ENCODE measurements at regions of chr15 and their contacts with region 1.

Region 1: DNA sequence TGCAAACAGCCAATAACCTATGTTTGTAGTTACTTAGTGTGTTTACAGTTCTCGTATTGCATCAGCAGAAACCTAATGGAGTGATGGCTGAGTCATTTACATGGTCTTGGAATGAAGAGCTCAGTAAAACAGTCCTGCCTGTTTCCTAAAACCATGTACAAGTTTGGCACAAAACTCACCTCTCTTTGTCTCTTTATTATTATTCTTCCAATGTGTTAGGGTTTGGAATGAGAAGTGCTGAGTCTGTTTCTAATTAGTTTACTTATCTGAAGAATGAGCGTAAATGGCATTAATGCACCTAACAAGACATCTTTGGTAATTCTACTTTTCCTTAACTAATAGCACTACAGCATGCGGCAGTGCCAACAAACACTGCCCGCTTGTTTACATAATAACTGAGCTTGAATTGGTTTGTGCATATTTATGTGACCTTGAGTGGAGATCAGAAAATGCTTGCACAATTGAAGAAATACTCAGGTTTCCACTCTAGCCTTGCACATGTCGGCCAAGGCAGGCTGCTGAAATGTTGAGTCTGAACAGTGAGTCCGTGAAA is 385.4 kb upstream of the SEMA6D start:
- DNase-seq: peak; percentile 16
- H3K4me3 ChIP-seq: no peak overlapping the region
- H3K27ac ChIP-seq: peak overlapping the region; percentile 3
- H3K4me1 ChIP-seq: peaks cover 12% of the 10 kb centered on the region
- H3K27me3 ChIP-seq: no peaks in the 10 kb centered on the region
- CTCF ChIP-seq: no peak

Region 2: GRCh38 chr15:47384341-47384740 is 52.4 kb after region 1 on chr15:
- CTCF ChIA-PET with region 1: no interaction called
- POLR2A ChIA-PET with region 1: interaction called, 14 read pairs
- intact Hi-C with region 1: no loop called
- DNase-seq: peak; percentile 81
- H3K4me3 ChIP-seq: no peak overlapping the region
- H3K27ac ChIP-seq: peak overlapping the region; percentile 15
- H3K4me1 ChIP-seq: peaks cover 15% of the 10 kb centered on the region
- H3K27me3 ChIP-seq: no peaks in the 10 kb centered on the region
- CTCF ChIP-seq: no peak

Region 3: DNA sequence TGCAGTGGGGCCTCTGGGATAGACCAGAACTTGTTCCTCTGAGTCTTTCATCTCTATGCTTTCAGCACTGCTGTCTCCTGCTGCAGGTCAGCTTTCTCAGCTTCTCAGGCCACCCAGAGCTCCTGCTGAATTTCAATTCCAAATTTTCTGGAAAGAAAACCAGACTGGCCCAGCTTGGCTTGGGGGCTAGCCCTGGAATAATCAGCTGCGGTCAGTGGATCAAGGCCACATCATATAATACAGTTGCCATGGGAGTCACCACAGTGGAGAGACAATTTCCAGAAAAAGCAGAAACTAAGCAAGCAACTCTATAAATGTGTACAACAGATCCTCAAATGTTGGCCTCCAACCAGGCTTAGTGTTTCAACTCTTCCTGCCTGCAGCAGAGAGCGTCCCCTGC is 697.7 kb after region 1 on chr15:
- CTCF ChIA-PET with region 1: no interaction called
- POLR2A ChIA-PET with region 1: no interaction called
- intact Hi-C with region 1: no loop called
- DNase-seq: no peak
- H3K4me3 ChIP-seq: no peak overlapping the region
- H3K27ac ChIP-seq: no peak overlapping the region
- H3K4me1 ChIP-seq: no peaks in the 10 kb centered on the region
- H3K27me3 ChIP-seq: peaks cover 5% of the 10 kb centered on the region
- CTCF ChIP-seq: no peak